ENCODE measurements at regions of chr17 and their contacts with region 1.

Region 1: GRCh38 chr17:37406635-37407461 is at the starts of genes ACACA and TADA2A:
- DNase-seq: peak; percentile 78
- ATAC-seq: peak; percentile 98
- H3K4me3 Mint-ChIP-seq: peak within 1 kb of the TSS; percentile 97
- H3K27ac Mint-ChIP-seq: peak within 1 kb of the TSS; percentile 92
- H3K4me1 Mint-ChIP-seq: peaks cover 36% of the 10 kb centered on the region
- H3K27me3 Mint-ChIP-seq: no peaks in the 10 kb centered on the region
- CTCF ChIP-seq: no peak
- total RNA-seq, gene ACACA: 32.4 and 42.4 TPM in 2 replicates
- total RNA-seq, gene TADA2A: 35.6 and 42.0 TPM in 2 replicates

Region 2: GRCh38 chr17:37089956-37090355 is 316.9 kb before region 1 on chr17:
- CTCF ChIA-PET with region 1: no interaction called
- POLR2A ChIA-PET with region 1: no interaction called
- intact Hi-C with region 1: no loop called
- DNase-seq: no peak
- ATAC-seq: no peak
- H3K4me3 Mint-ChIP-seq: no peak overlapping the region
- H3K27ac Mint-ChIP-seq: peak overlapping the region; percentile 38
- H3K4me1 Mint-ChIP-seq: peaks cover 11% of the 10 kb centered on the region
- H3K27me3 Mint-ChIP-seq: no peaks in the 10 kb centered on the region
- CTCF ChIP-seq: no peak

Region 3: DNA sequence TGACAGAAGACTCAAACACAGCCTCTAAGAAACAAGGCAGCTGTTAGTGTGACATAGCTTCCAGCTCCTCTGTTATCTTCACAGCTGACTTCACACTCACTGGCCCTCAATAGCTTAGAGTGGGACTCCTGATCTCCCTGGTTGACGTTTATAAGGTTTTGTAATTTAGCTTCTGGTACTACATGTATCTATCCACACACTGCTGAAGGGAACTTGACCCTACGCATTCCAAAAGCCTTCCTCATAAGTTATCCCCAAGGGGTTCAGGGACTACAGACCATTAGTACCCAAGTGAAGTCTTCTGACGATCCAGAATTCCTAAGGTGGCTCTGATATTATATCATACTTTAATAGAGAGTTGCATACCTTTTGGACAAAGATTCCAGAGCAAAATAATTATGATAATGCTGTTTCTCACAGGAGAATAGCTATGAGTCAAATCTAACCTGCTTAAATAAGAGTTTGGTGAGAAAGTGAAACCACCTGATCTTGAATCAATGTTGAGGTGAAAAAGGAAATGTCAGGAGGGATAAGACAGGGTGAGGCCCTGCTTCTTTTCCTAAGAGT is 14.7 kb before region 1 on chr17:
- CTCF ChIA-PET with region 1: no interaction called
- POLR2A ChIA-PET with region 1: interaction called, 3 read pairs
- intact Hi-C with region 1: loop called (anchors 1 kb)
- DNase-seq: no peak
- ATAC-seq: no peak
- H3K4me3 Mint-ChIP-seq: no peak overlapping the region
- H3K27ac Mint-ChIP-seq: no peak overlapping the region
- H3K4me1 Mint-ChIP-seq: peaks cover 7% of the 10 kb centered on the region
- H3K27me3 Mint-ChIP-seq: no peaks in the 10 kb centered on the region
- CTCF ChIP-seq: no peak

Region 4: GRCh38 chr17:37489197-37490001 is 82.6 kb after region 1 on chr17 and contains the start of gene DUSP14:
- CTCF ChIA-PET with region 1: no interaction called
- POLR2A ChIA-PET with region 1: no interaction called
- intact Hi-C with region 1: loop called (anchors 1 kb)
- DNase-seq: peak; percentile 79
- ATAC-seq: peak; percentile 82
- H3K4me3 Mint-ChIP-seq: peak within 1 kb of the TSS; percentile 95
- H3K27ac Mint-ChIP-seq: peak within 1 kb of the TSS; percentile 82
- H3K4me1 Mint-ChIP-seq: peaks cover 26% of the 10 kb centered on the region
- H3K27me3 Mint-ChIP-seq: no peaks in the 10 kb centered on the region
- CTCF ChIP-seq: no peak
- total RNA-seq, gene DUSP14: 4.3 TPM in 2 replicates

Region 5: DNA sequence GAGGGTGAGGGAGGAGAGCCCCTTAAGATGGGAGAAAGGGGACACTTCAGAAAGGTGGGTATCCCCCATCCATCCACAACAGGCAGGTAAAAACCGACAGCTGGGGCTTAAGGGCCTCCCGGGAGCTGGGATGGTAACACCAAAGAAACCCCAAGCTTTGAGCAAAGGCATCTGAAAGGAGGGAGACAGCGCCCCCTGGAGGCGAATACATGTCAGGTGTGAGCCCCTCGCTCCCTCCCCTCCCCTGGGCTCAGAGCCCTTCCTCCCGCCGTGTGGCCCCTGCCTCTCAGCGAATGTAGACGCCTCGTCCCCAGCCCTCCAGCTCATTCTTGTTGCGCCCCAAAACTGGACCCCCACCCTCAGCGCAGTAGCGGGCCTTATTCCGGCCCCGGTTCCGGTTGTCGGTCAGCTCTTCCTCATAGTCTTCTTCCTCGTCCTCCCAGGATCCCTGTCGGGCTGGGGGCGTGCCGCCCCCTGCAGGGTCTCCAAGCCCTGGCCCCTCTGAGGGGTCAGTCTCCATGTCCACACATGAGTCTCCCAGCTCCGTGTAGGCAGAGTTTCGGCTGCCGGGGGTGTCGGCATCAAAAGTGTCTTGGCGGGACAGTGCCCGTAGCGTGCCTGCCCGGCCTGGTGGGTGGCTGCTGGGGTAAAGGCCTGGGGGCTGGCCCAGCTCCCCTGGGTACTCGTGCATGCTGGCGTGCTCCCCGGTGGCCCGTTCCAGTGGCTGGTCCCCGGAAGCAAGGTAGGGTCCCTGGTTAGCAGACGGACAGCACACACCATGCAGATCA is 1768.3 kb after region 1 on chr17:
- CTCF ChIA-PET with region 1: no interaction called
- POLR2A ChIA-PET with region 1: no interaction called
- intact Hi-C with region 1: no loop called
- DNase-seq: peak; percentile 55
- ATAC-seq: peak; percentile 85
- H3K4me3 Mint-ChIP-seq: peak overlapping the region; percentile 60
- H3K27ac Mint-ChIP-seq: no peak overlapping the region
- H3K4me1 Mint-ChIP-seq: peaks cover 5% of the 10 kb centered on the region
- H3K27me3 Mint-ChIP-seq: peaks cover 19% of the 10 kb centered on the region
- CTCF ChIP-seq: no peak